WTC11 (cell line): ENCODE measurements at regions of chr14 and their contacts with region 1.

Region 1: DNA sequence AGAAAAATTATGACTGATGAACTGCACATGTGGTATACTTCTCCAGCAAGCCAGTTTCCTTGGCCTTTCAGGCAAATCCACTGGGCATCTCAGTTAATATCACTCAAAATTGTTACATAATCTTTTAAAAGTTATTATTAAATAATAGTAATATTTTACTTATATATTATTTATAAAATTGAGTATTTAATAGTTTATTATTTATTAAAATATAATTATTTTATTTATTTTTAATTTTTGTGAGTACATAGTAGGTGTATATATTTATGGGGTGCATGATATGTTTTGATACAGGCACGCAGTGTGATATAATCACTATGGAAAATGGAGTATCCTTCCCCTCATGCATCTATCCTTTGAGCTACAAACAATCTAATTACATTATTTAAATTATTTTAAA is 384.1 kb upstream of the LRFN5 start:
- DNase-seq: no peak
- ATAC-seq: no peak
- H3K4me3 Mint-ChIP-seq: no peak overlapping the region
- H3K27ac Mint-ChIP-seq: no peak overlapping the region
- H3K4me1 Mint-ChIP-seq: peaks cover 5% of the 10 kb centered on the region
- H3K27me3 Mint-ChIP-seq: no peaks in the 10 kb centered on the region
- CTCF ChIP-seq: no peak

Region 2: GRCh38 chr14:40733206-40733605 is 489.4 kb before region 1 on chr14:
- CTCF ChIA-PET with region 1: no interaction called
- POLR2A ChIA-PET with region 1: interaction called, 10 read pairs
- DNase-seq: no peak
- ATAC-seq: no peak
- H3K4me3 Mint-ChIP-seq: no peak overlapping the region
- H3K27ac Mint-ChIP-seq: no peak overlapping the region
- H3K4me1 Mint-ChIP-seq: peaks cover 4% of the 10 kb centered on the region; the same call in 1 of the 2 replicates
- H3K27me3 Mint-ChIP-seq: no peaks in the 10 kb centered on the region
- CTCF ChIP-seq: no peak

Region 3: GRCh38 chr14:41130274-41130673 is 92.3 kb before region 1 on chr14:
- CTCF ChIA-PET with region 1: no interaction called
- POLR2A ChIA-PET with region 1: no interaction called
- DNase-seq: no peak
- ATAC-seq: no peak
- H3K4me3 Mint-ChIP-seq: no peak overlapping the region
- H3K27ac Mint-ChIP-seq: no peak overlapping the region
- H3K4me1 Mint-ChIP-seq: no peaks in the 10 kb centered on the region
- H3K27me3 Mint-ChIP-seq: no peaks in the 10 kb centered on the region
- CTCF ChIP-seq: no peak